ENCODE measurements at regions of chr6 and their contacts with region 1.

Region 1: DNA sequence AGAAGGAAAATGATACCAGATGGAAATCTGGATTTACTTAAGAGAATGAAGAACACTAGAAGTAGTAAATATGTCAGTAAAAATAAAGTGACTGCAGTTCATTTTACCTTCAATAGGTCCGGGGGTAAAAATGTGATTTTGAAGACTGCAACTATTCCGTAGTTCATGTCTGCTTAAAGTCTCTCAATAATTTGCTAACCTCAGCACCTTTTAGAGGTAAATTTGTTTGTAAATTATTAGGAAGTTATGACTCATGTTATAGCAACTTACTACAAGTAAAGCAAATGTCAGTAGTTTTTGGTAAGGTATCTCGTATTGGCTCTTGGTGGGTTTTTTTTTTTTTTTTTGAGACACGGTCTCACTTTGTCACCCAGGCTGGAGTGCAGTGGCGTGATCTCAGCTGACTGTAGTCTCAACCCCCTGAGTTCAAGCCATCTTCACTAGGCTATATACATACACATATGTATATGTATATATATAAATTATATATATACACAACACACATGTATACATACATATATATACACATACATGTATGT is 32.1 kb downstream of the BICRAL start:
- DNase-seq: no peak
- ATAC-seq: no peak
- H3K4me3 ChIP-seq: no peak overlapping the region
- H3K4me3 Mint-ChIP-seq: no peak overlapping the region
- H3K27ac ChIP-seq: no peak overlapping the region
- H3K27ac Mint-ChIP-seq: no peak overlapping the region
- H3K4me1 ChIP-seq: no peaks in the 10 kb centered on the region
- H3K4me1 Mint-ChIP-seq: peaks cover 16% of the 10 kb centered on the region
- H3K27me3 ChIP-seq: no peaks in the 10 kb centered on the region
- H3K27me3 Mint-ChIP-seq: no peaks in the 10 kb centered on the region
- CTCF ChIP-seq: no peak

Region 2: DNA sequence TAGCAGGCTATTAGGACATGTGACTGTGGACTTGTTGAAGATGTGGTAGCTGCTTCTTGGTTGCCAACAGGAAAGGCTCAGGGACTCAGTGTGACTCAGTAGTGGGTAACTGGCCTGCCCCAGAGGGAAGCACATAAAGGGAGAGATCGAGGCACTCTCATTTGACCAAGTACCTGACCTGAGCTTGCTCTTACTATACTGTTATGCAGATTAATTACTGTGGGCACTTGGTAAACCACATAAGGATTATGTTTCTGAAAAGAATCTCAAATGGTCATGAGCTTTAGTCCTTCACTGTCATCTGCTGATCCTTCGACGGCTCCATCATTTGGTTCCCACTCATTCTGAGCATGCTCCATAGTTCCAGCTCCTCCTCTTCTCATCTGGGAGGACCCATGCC is 17.3 kb after region 1 on chr6:
- CTCF ChIA-PET with region 1: no interaction called
- POLR2A ChIA-PET with region 1: interaction called, 3 read pairs
- intact Hi-C with region 1: loop called in 1 of 2 experiments (anchors 2 kb)
- DNase-seq: no peak
- ATAC-seq: no peak
- H3K4me3 ChIP-seq: no peak overlapping the region
- H3K4me3 Mint-ChIP-seq: no peak overlapping the region
- H3K27ac ChIP-seq: no peak overlapping the region
- H3K27ac Mint-ChIP-seq: no peak overlapping the region
- H3K4me1 ChIP-seq: no peaks in the 10 kb centered on the region
- H3K4me1 Mint-ChIP-seq: peaks cover 23% of the 10 kb centered on the region
- H3K27me3 ChIP-seq: no peaks in the 10 kb centered on the region
- H3K27me3 Mint-ChIP-seq: no peaks in the 10 kb centered on the region
- CTCF ChIP-seq: no peak

Region 3: GRCh38 chr6:43263314-43264178 is 449.6 kb after region 1 on chr6:
- CTCF ChIA-PET with region 1: no interaction called
- POLR2A ChIA-PET with region 1: no interaction called
- intact Hi-C with region 1: no loop called
- DNase-seq: peak; percentile 57 to 84 (median 75)
- ATAC-seq: peak; percentile 95
- H3K4me3 ChIP-seq: no peak overlapping the region
- H3K4me3 Mint-ChIP-seq: no peak overlapping the region
- H3K27ac ChIP-seq: no peak overlapping the region
- H3K27ac Mint-ChIP-seq: no peak overlapping the region
- H3K4me1 ChIP-seq: no peaks in the 10 kb centered on the region
- H3K4me1 Mint-ChIP-seq: no peaks in the 10 kb centered on the region
- H3K27me3 ChIP-seq: no peaks in the 10 kb centered on the region
- H3K27me3 Mint-ChIP-seq: peaks cover 3% of the 10 kb centered on the region
- CTCF ChIP-seq: peak; percentile 57

Measured in CD8-positive, alpha-beta T cell (primary cell).